ENCODE measurements at regions of chr15 and their contacts with region 1.

Region 1: GRCh38 chr15:76139368-76140073 is 79.7 kb downstream of the TMEM266 start:
- H3K4me3 ChIP-seq: no peak overlapping the region
- H3K27ac ChIP-seq: no peak overlapping the region
- H3K4me1 ChIP-seq: no peaks in the 10 kb centered on the region
- CTCF ChIP-seq: peak; percentile 65

Region 2: DNA sequence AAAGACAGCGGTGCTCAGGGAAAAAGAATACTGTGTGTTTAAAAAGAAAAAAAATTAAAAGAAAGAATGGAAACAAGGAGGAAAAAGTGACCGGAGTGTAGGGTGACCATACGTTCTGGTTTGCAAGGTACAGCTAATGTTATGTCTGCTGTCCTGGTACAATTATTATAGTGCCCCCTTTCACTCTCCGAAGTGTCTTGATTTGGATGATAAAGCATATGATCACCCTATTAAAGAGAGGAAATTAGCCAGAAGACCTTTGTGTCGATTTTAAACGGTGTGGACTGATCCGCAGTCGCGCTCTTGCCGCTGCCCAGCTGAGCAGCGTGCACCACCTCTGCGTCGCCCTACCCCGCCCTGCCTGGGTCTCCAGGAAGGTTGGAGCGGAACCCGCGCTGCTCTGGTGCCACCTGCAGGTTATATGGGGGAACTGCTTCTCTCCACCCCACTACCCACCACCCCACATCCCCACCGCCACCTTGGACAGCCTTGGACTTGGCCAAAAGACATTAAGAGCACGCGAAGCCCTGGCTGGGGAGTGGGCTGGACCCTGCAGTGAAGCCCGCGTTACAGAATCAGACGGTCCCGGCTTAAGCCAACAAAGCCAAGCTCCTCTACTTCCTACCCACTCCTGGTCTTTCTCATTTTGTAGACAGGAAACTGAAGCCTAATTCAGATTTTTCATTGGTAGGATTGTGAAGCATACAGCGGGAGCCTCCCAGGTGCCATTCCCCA is 337.5 kb before region 1 on chr15:
- CTCF ChIA-PET with region 1: interaction called, 13 read pairs
- POLR2A ChIA-PET with region 1: no interaction called
- H3K4me3 ChIP-seq: no peak overlapping the region
- H3K27ac ChIP-seq: no peak overlapping the region
- H3K4me1 ChIP-seq: no peaks in the 10 kb centered on the region
- CTCF ChIP-seq: peak; percentile 92

Region 3: DNA sequence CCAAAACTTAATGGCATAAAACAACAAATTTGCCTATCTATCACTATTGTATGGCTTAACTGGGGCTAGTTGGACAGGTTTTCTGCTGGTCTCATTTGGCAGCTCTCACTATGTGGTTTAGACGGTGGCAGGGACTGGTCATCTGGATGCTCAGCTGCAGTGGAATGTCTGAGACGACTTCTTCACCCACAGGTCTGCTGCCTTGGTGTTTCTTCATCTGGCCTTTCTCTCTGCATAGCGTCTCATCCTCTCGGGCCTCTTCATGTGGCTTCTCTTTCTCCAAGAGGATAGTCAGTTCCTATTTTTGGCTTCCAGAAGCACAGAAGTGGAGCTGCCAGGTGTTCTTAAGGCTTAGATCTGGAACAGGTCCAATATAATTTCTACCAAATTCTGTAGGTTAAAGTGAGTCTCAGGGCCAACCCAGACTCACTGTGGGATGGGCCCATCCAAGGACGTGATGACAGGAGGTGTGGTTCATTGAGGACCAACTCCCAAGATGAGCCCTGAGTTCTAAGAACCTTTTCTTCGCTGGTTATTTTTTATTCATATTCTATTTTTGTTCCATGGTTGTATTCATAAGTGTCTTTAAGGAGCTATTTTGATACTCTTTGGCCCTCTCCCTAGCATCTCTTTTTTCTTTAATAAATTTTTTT is 277.6 kb before region 1 on chr15:
- CTCF ChIA-PET with region 1: no interaction called
- POLR2A ChIA-PET with region 1: no interaction called
- H3K4me3 ChIP-seq: no peak overlapping the region
- H3K27ac ChIP-seq: no peak overlapping the region
- H3K4me1 ChIP-seq: peaks cover 14% of the 10 kb centered on the region
- CTCF ChIP-seq: no peak

Region 4: DNA sequence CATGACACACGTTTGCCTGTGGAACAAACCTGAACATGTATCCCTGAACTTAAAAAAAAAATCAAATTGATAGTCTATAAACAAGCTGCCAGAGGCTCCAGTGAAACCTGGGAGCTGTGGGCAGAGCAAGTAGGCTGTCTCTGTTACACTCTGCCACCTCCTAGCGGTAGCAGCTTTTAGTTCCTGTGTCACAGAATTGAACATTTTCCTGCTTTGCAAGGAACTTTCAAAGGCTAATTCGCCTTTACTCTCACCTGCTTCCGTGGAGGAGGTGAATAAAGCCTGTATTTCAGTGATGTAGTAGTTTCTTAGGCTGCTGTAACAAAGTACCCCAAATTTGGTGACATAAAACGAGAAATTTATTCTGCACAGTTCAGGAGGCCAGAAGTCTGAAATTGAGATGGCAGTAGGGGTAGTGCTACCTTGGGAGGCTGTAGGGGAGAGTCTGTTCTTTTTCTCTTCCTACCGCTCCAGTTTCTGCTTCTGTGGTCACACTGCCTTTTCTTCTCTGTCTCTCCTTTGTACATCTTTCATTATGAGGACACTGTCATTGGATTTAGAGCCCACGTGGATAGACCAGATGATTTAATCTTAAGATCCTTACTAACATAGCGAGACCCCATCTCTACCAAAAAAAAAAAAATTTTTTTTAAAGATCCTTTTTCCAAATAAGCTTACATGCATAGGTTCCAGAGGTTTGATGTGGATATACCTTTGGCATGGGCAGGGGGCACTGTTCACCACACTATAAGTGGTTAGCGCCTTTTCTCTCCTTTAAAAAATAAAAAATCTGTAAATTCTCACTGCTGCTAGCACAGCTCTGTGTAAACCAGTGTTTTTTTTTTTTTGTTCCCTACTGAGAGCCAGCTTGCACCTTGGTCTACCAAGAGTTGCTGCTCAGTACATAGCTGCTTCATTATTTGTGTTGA is 210.6 kb before region 1 on chr15:
- CTCF ChIA-PET with region 1: interaction called, 20 read pairs
- POLR2A ChIA-PET with region 1: no interaction called
- H3K4me3 ChIP-seq: no peak overlapping the region
- H3K27ac ChIP-seq: no peak overlapping the region
- H3K4me1 ChIP-seq: peaks cover 9% of the 10 kb centered on the region
- CTCF ChIP-seq: no peak

Region 5: DNA sequence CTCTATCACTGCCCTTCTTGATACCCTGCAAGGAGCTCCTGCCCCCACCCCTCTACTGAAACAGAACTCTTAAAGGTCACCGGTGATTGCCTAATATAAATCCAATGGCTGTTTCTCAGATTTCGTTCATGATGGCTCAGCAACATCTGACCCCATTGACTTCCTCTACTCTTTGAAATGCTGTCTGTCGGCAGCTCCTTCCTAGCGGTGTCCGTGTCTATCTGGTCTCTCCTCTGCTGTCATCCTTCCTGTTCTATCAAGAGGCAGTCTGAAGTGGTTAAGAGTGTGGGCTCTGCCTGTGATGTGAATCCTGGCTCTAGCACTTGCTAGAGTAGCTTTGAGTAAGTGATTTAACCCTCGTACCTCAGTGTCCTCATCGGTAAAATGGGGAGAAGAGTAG is 74.3 kb before region 1 on chr15:
- CTCF ChIA-PET with region 1: interaction called, 261 read pairs
- POLR2A ChIA-PET with region 1: interaction called, 18 read pairs
- H3K4me3 ChIP-seq: no peak overlapping the region
- H3K27ac ChIP-seq: no peak overlapping the region
- H3K4me1 ChIP-seq: peaks cover 4% of the 10 kb centered on the region
- CTCF ChIP-seq: no peak

Region 6: GRCh38 chr15:76127880-76128279 is 11.6 kb before region 1 on chr15:
- CTCF ChIA-PET with region 1: interaction called, 35 read pairs
- POLR2A ChIA-PET with region 1: no interaction called
- H3K4me3 ChIP-seq: no peak overlapping the region
- H3K27ac ChIP-seq: no peak overlapping the region
- H3K4me1 ChIP-seq: no peaks in the 10 kb centered on the region
- CTCF ChIP-seq: no peak

Region 7: GRCh38 chr15:76163475-76163881 is 24.0 kb after region 1 on chr15:
- CTCF ChIA-PET with region 1: interaction called, 10 read pairs
- POLR2A ChIA-PET with region 1: no interaction called
- H3K4me3 ChIP-seq: no peak overlapping the region
- H3K27ac ChIP-seq: no peak overlapping the region
- H3K4me1 ChIP-seq: peaks cover 16% of the 10 kb centered on the region
- CTCF ChIP-seq: no peak